A549 (cell line): ENCODE measurements at regions of chr4 and their contacts with region 1.

Region 1: GRCh38 chr4:74133786-74134499 is 24.0 kb upstream of the MTHFD2L start:
- DNase-seq: peak; percentile 18 to 89
- ATAC-seq: peak; percentile 95 to 97
- H3K4me3 ChIP-seq: no peak overlapping the region
- H3K27ac ChIP-seq: peak overlapping the region; percentile 80 to 82
- H3K4me1 ChIP-seq: peaks cover 6% of the 10 kb centered on the region; the same call in 2 of the 3 replicates
- CTCF ChIP-seq: peak; percentile 67
- EP300 ChIP-seq: no peak
- POLR2A ChIP-seq: no peak
- RAD21 ChIP-seq: peak; percentile 95 to 96

Region 2: GRCh38 chr4:73676861-73677323 is 457.1 kb before region 1 on chr4:
- CTCF ChIA-PET with region 1: interaction called, 10 read pairs
- POLR2A ChIA-PET with region 1: no interaction called
- DNase-seq: peak; percentile 10 to 51
- ATAC-seq: peak; percentile 57 to 66; a peak in 4 of 6 replicates
- H3K4me3 ChIP-seq: no peak overlapping the region
- H3K27ac ChIP-seq: peak overlapping the region; percentile 59 to 71
- H3K4me1 ChIP-seq: peaks cover 48% of the 10 kb centered on the region
- CTCF ChIP-seq: no peak
- EP300 ChIP-seq: peak; percentile 63 to 69; a peak in 3 of 5 replicates
- POLR2A ChIP-seq: no peak
- RAD21 ChIP-seq: no peak; a peak in 1 of 5 replicates

Region 3: GRCh38 chr4:74038161-74039064 is 95.5 kb before region 1 on chr4 and contains the start of gene CXCL3:
- CTCF ChIA-PET with region 1: interaction called, 17 read pairs
- POLR2A ChIA-PET with region 1: interaction called, 3 read pairs
- DNase-seq: peak; percentile 46 to 72
- ATAC-seq: peak; percentile 93 to 95
- H3K4me3 ChIP-seq: peak within 1 kb of the TSS; percentile 92
- H3K27ac ChIP-seq: peak within 1 kb of the TSS; percentile 95
- H3K4me1 ChIP-seq: peaks cover 43% of the 10 kb centered on the region
- CTCF ChIP-seq: peak; percentile 50; the same call in 2 of the 3 replicates
- EP300 ChIP-seq: no peak
- POLR2A ChIP-seq: no peak; the same call in 1 of the 2 replicates
- RAD21 ChIP-seq: peak in 1 of 2 experiments; percentile 63; a peak in 3 of 5 replicates
- polyA plus RNA-seq, gene CXCL3: 14.9 and 17.9 TPM in 2 replicates

Region 4: GRCh38 chr4:74109116-74109869 is 24.6 kb before region 1 on chr4:
- CTCF ChIA-PET with region 1: interaction called, 40 read pairs
- POLR2A ChIA-PET with region 1: interaction called, 4 read pairs
- DNase-seq: peak; percentile 64 to 94
- ATAC-seq: peak; percentile 94 to 97
- H3K4me3 ChIP-seq: no peak overlapping the region; the same call in 2 of the 3 replicates
- H3K27ac ChIP-seq: peak overlapping the region; percentile 95 to 99
- H3K4me1 ChIP-seq: peaks cover 70% of the 10 kb centered on the region
- CTCF ChIP-seq: no peak
- EP300 ChIP-seq: peak; percentile 74 to 88; a peak in 4 of 5 replicates
- POLR2A ChIP-seq: no peak
- RAD21 ChIP-seq: peak in 1 of 2 experiments; percentile 26; a peak in 1 of 5 replicates

Region 5: GRCh38 chr4:74146581-74147129 is 12.7 kb after region 1 on chr4:
- CTCF ChIA-PET with region 1: interaction called, 13 read pairs
- POLR2A ChIA-PET with region 1: no interaction called
- DNase-seq: no peak
- ATAC-seq: no peak
- H3K4me3 ChIP-seq: no peak overlapping the region
- H3K27ac ChIP-seq: no peak overlapping the region
- H3K4me1 ChIP-seq: no peaks in the 10 kb centered on the region
- CTCF ChIP-seq: no peak
- EP300 ChIP-seq: no peak
- POLR2A ChIP-seq: no peak
- RAD21 ChIP-seq: no peak